IMR-90 (cell line): ENCODE measurements at regions of chr6 and their contacts with region 1.

Region 1: DNA sequence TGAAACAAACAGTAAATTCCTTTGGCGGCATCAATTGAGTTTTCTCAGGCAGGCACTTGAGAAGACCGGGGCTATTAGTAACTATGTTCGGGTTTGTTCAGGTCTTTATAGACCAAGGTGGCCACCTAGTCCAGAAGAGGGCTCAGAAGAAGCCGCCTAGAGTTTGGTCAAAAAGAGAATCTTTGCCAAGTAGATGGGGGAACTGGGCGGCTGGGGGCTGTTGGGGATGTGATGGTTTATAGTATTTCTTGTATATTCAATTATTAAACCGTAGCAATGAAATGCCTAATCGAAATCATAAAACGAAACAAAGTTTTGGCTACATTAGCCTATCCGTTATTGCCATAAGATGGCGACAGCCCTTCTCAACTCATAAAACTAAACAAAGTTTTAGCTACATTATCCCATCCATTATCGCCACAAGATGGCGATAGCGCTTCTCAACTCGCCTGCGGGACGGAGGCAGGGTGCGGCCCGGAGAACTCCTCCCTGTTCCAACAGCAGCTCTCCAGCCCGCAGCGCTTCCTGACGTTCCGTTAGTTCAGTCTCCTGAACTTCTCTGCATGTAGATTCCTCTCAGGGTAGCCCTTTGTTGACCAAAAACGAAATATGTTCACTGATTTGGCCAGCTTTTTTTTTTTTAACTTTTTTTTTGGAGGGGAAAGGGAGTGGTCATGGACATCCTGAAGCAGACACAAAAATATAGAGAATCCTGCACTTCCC is 120.5 kb upstream of the PRSS16 start:
- DNase-seq: peak; percentile 90
- ATAC-seq: peak; percentile 93
- H3K4me3 ChIP-seq: peak overlapping the region; percentile 32; the same call in 1 of the 2 replicates
- H3K27ac ChIP-seq: peak overlapping the region; percentile 36
- H3K4me1 ChIP-seq: peaks cover 2% of the 10 kb centered on the region; the same call in 1 of the 2 replicates
- H3K27me3 ChIP-seq: no peaks in the 10 kb centered on the region
- CTCF ChIP-seq: peak; percentile 98
- POLR2A ChIP-seq: 0 out of 2 replicates have a peak, but pooled peaks have one; percentile 20
- RAD21 ChIP-seq: peak; percentile 81

Region 2: DNA sequence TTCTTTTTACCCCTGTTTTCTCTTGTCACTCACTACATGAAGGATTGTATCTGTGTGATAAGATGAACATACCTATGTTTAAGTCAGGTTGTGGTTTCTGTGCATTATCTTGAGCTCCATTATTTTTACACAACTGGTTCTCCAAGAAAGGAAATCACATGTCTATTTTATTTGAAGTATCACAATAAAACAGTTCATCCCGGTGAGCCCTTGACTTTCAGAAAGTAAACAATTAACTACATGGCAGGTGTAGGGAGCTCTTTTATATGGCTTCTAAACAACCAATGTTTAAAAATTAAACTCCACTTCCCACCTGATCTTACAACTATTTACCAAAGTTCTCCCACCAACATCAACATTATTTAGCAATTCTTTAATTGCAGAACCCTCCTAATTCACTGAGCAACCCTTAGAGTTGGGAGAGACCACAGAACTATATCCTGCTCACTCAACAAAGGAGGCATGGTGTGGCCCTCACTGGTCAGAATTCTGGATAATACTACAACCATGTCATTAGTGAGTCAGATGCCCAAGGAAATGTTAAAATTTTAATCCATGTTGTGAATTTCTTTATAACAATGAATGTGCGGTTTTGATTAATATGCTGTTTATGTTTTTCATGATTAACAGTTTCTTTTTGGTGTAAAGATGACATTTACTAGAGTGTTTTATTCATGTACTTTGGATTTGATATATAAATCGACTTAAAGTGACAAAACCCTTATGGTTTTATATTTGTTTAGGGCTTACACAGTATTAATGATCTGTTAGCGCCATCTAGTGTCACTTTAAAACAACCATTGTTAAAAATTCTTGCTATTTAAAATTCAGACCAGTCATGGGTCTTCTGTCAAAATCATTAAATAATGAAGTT is 1524.9 kb before region 1 on chr6:
- CTCF ChIA-PET with region 1: no interaction called
- POLR2A ChIA-PET with region 1: no interaction called
- dilution Hi-C with region 1: no loop called
- in situ Hi-C with region 1: no loop called
- intact Hi-C with region 1: no loop called
- DNase-seq: peak; percentile 67
- ATAC-seq: peak; percentile 62
- H3K4me3 ChIP-seq: no peak overlapping the region
- H3K27ac ChIP-seq: no peak overlapping the region
- H3K4me1 ChIP-seq: no peaks in the 10 kb centered on the region
- H3K27me3 ChIP-seq: no peaks in the 10 kb centered on the region
- CTCF ChIP-seq: peak; percentile 72
- POLR2A ChIP-seq: no peak
- RAD21 ChIP-seq: peak; percentile 71

Region 3: DNA sequence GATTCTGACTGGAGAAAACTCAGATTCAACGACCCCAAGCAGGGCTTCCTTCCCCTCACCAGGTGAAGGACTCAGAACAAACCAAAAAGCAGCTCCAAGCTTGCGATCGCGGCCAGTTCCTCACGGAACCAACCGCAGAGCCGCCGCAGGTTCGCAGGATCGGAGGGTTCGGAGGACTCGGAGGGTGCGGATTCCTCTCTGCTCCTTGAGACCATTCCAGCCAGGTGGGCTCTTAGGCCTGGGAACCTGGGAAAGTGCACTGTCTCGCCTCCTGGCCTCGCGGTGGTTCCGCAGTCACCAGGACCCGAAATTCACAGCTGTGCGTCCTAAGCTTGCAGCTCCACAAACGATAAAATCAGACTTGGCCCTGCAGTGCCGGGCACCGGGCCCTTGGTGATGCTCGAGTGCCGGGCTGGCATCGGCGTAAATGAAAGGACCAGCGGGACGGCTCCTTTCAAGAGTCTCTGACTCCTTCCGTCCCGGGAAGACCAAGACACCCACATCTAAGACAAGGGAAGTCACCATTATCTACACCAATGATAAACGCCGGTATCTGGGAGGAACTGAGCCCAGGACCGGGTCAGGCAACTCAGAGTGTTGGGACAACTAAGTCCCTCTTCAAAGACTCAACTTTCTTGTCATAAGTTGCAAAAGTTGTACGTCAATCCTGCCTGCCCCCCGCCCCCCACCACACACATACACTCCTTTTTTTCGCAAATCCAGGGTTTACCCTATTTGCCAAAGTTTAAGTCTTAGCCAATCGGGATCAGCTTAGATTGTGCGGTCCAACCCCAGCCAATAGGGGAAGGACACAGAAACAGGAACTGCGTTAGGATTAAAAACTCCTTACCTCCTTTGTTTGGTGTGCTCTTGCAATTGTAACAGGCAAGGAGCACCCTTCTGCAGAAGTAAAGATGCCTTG is 50.8 kb after region 1 on chr6:
- CTCF ChIA-PET with region 1: no interaction called
- POLR2A ChIA-PET with region 1: no interaction called
- dilution Hi-C with region 1: no loop called
- in situ Hi-C with region 1: no loop called
- intact Hi-C with region 1: loop called (anchors 1 kb)
- DNase-seq: peak; percentile 94
- ATAC-seq: peak; percentile 92
- H3K4me3 ChIP-seq: peak overlapping the region; percentile 95
- H3K27ac ChIP-seq: peak overlapping the region; percentile 91
- H3K4me1 ChIP-seq: 0 out of 2 replicates have a peak, but pooled peaks cover 1% of the 10 kb centered on the region
- H3K27me3 ChIP-seq: no peaks in the 10 kb centered on the region
- CTCF ChIP-seq: peak; percentile 59
- POLR2A ChIP-seq: peak; percentile 73; the same call in 1 of the 2 replicates
- RAD21 ChIP-seq: peak; percentile 55